ENCODE measurements at regions of chr12 and their contacts with region 1.

Region 1: GRCh38 chr12:42023733-42024494 is 120.8 kb downstream of the GXYLT1 start:
- DNase-seq: peak; percentile 88
- ATAC-seq: peak; percentile 94

Region 2: GRCh38 chr12:41277116-41277945 is 746.6 kb before region 1 on chr12:
- intact Hi-C with region 1: loop called (anchors 5 kb)
- DNase-seq: no peak
- ATAC-seq: no peak